Stomach (tissue), 19 donors: ENCODE measurements at regions of chr1 and their contacts with region 1.

Region 1: DNA sequence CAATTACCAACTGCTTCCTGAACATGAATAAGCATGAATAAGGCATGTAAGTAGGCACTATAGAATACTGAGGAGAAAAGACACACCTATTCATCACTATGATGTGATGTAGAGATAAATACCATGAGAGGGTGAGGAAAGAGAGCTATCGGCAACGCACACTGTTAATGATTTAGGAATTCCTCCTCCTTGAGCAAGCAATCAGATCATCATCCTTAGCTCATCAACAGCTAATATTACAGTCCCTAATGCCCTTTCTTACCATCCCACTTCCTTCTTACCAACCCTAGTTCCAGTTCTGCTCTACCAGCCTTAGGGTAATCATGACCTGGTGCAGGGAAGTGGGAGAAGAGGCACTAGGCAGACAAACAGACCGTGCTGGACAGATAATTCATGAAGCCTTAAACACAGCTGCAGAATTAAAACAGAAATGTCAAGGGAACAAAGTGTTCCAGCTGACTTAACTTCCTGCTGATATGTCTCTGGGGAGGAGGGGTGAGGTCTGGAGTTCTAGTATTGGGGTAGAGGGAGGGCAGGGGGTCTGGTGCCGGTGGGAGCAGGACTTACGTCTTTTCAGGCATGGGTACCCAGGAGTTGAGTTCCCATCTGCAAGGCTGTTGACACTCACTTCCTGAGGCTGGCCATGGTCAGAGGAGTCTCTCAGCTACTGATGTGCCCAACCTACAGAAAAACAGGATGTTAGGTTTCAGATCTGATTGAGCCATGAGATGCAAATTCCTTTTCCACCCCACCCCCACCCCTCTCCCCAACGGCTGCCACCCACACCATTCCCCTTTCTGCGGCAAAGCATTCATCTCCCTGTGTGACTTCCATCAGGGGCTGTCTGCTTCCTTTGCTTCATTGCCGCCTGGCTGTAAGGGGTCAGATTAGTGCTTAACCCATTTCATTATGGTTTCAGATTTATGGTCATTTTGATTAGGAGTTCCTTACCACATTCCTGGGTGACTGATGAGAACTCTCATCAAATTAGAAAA is 12.6 kb upstream of the RCSD1 start:
- DNase-seq: peak in 1 of 2 donors; percentile 63
- H3K4me3 ChIP-seq: peak overlapping the region in 1 of 4 donors; percentile 7
- H3K27ac ChIP-seq: peak overlapping the region; percentile 37 to 83 (median 69)
- H3K4me1 ChIP-seq: peaks cover 5 to 28% (median 16%) of the 10 kb centered on the region in 4 donors
- H3K27me3 ChIP-seq: no peaks in the 10 kb centered on the region
- CTCF ChIP-seq: no peak
- EP300 ChIP-seq: peak; percentile 26
- POLR2A ChIP-seq: no peak

Region 2: DNA sequence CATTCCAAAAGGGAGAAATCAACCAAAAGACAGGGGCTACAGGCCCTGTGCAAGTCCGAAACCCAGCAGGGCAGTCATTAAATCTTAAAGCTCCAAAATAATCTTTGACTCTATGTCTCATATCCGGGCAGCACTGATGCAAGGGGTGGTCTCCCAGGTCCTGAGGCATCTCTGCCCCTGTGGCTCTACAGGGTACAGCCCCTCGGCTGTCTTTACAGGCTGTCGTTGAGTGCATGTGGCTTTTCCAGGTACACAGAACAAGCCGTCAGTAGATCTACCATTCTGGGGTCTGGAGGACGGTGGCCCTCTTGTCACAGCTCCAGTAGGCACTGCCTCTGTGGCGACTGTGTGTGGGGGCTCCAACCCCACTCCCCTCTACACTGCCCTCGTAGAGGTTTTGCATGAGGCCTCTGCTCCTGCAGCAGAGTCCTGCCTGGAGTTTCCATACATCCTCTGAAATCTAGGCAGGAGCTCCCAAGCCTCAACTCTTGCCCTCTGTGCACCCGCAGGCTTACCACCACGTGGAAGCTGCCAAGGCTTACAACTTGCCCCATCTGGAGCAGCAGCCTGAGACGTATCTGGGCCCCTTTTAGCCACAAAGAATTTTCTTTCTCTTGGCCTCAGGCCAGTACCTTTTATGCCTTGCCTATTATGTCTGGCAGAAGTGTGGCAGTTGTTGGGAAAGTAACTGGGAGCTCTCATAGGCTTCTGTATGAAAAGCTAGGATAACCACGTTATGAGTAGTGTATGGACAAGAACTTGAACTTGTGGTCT is 344.2 kb before region 1 on chr1:
- intact Hi-C with region 1: no loop called
- DNase-seq: peak in 1 of 2 donors; percentile 38
- H3K4me3 ChIP-seq: no peak overlapping the region
- H3K27ac ChIP-seq: no peak overlapping the region
- H3K4me1 ChIP-seq: peaks cover 12 to 59% (median 28%) of the 10 kb centered on the region in 4 donors
- H3K27me3 ChIP-seq: no peaks in the 10 kb centered on the region
- CTCF ChIP-seq: no peak
- EP300 ChIP-seq: no peak
- POLR2A ChIP-seq: no peak

Region 3: GRCh38 chr1:167663002-167663772 is 45.7 kb after region 1 on chr1:
- intact Hi-C with region 1: loop called (anchors 10 kb)
- DNase-seq: peak in 1 of 2 donors; percentile 31
- H3K4me3 ChIP-seq: no peak overlapping the region
- H3K27ac ChIP-seq: peak overlapping the region in 4 of 5 donors; percentile 37 to 76 (median 54)
- H3K4me1 ChIP-seq: peaks cover 23 to 71% (median 40%) of the 10 kb centered on the region in 4 donors
- H3K27me3 ChIP-seq: no peaks in the 10 kb centered on the region
- CTCF ChIP-seq: no peak
- EP300 ChIP-seq: no peak
- POLR2A ChIP-seq: no peak